ENCODE measurements at regions of chr18 and their contacts with region 1.

Region 1: DNA sequence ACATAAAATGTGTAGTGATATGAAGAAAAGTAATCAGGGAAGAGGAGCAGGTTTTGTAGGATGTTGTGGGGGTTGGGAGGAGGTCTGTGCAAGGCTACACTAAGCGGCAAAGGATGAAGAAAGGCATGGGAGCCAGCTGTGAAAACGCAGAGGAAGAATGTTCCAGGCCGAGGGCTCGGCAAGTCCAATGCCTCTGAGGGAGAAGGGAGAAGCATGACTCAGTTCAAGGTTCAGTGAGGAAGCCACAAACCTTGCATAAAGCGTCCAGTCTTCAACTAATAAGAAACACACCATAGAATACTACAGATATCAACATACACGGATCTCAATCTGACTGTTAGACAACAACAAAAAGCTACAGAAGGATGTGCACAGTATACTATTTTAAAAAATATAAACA is 16.2 kb downstream of the EPB41L3 start:
- DNase-seq: peak; percentile 86
- ATAC-seq: peak; percentile 95
- H3K4me3 ChIP-seq: no peak overlapping the region
- H3K27ac ChIP-seq: no peak overlapping the region
- H3K4me1 ChIP-seq: peaks cover 1% of the 10 kb centered on the region; the same call in 1 of the 2 replicates
- H3K27me3 ChIP-seq: no peaks in the 10 kb centered on the region
- CTCF ChIP-seq: no peak
- POLR2A ChIP-seq: no peak
- RAD21 ChIP-seq: no peak

Region 2: GRCh38 chr18:5463379-5463778 is 64.2 kb before region 1 on chr18:
- CTCF ChIA-PET with region 1: no interaction called
- POLR2A ChIA-PET with region 1: no interaction called
- dilution Hi-C with region 1: no loop called
- in situ Hi-C with region 1: no loop called
- intact Hi-C with region 1: loop called (anchors 5 kb)
- DNase-seq: peak; percentile 93
- ATAC-seq: peak; percentile 88
- H3K4me3 ChIP-seq: no peak overlapping the region
- H3K27ac ChIP-seq: no peak overlapping the region
- H3K4me1 ChIP-seq: peaks cover 6% of the 10 kb centered on the region
- H3K27me3 ChIP-seq: no peaks in the 10 kb centered on the region
- CTCF ChIP-seq: no peak
- POLR2A ChIP-seq: no peak
- RAD21 ChIP-seq: no peak

Region 3: GRCh38 chr18:7011172-7011571 is 1483.6 kb after region 1 on chr18:
- CTCF ChIA-PET with region 1: no interaction called
- POLR2A ChIA-PET with region 1: no interaction called
- dilution Hi-C with region 1: no loop called
- in situ Hi-C with region 1: no loop called
- intact Hi-C with region 1: no loop called
- DNase-seq: no peak
- ATAC-seq: no peak
- H3K4me3 ChIP-seq: no peak overlapping the region
- H3K27ac ChIP-seq: no peak overlapping the region
- H3K4me1 ChIP-seq: peaks cover 2% of the 10 kb centered on the region; the same call in 1 of the 2 replicates
- H3K27me3 ChIP-seq: no peaks in the 10 kb centered on the region
- CTCF ChIP-seq: no peak
- POLR2A ChIP-seq: no peak
- RAD21 ChIP-seq: no peak

Measured in IMR-90 (cell line).